PC-3 (cell line): ENCODE measurements at regions of chr18 and their contacts with region 1.

Region 1: DNA sequence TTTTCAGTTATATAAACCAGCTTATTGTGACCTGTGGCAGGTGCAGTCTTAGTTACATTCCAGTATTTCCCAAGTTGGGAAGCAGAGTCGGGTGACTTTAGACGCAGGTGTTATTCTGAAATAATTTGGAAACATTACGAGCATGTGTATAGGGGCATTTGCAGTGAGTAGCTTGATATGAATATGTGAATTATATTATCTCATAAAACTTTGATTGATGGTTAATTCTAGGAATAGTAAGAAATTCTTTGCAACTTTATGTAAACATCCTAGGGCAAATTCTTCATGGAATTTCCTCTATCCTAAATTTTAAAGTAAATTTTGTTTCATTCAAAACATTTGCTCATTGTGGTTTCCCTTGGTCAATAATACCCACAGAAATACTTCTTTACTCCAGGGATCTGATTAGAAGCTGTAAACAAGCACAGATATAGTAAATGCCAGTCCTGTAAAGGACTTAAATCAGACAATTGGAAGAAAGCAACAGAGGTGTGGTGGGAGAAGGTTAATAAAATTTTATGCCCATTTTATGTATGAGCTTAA is 580.6 kb upstream of the CDH2 start:
- DNase-seq: peak; percentile 60
- ATAC-seq: peak; percentile 90
- H3K4me3 ChIP-seq: no peak overlapping the region
- H3K27ac ChIP-seq: no peak overlapping the region
- H3K4me1 ChIP-seq: peaks cover 12% of the 10 kb centered on the region
- H3K27me3 ChIP-seq: no peaks in the 10 kb centered on the region
- CTCF ChIP-seq: no peak

Region 2: GRCh38 chr18:28183418-28184078 is 574.0 kb before region 1 on chr18:
- CTCF ChIA-PET with region 1: no interaction called
- POLR2A ChIA-PET with region 1: no interaction called
- intact Hi-C with region 1: loop called (anchors 1 kb)
- DNase-seq: peak; percentile 73
- ATAC-seq: peak; percentile 75
- H3K4me3 ChIP-seq: peak overlapping the region; percentile 19; the same call in 1 of the 2 replicates
- H3K27ac ChIP-seq: peak overlapping the region; percentile 63
- H3K4me1 ChIP-seq: peaks cover 60% of the 10 kb centered on the region
- H3K27me3 ChIP-seq: no peaks in the 10 kb centered on the region
- CTCF ChIP-seq: no peak

Region 3: GRCh38 chr18:29012364-29012763 is 254.8 kb after region 1 on chr18:
- CTCF ChIA-PET with region 1: no interaction called
- POLR2A ChIA-PET with region 1: no interaction called
- intact Hi-C with region 1: no loop called
- DNase-seq: no peak
- ATAC-seq: no peak
- H3K4me3 ChIP-seq: no peak overlapping the region
- H3K27ac ChIP-seq: no peak overlapping the region
- H3K4me1 ChIP-seq: no peaks in the 10 kb centered on the region
- H3K27me3 ChIP-seq: no peaks in the 10 kb centered on the region
- CTCF ChIP-seq: no peak